ENCODE measurements at regions of chr22 and their contacts with region 1.

Region 1: GRCh38 chr22:35656284-35656752 is 8.1 kb downstream of the APOL6 start:
- DNase-seq: no peak
- ATAC-seq: no peak
- H3K4me3 ChIP-seq: no peak overlapping the region
- H3K27ac ChIP-seq: no peak overlapping the region
- H3K4me1 ChIP-seq: no peaks in the 10 kb centered on the region
- H3K27me3 ChIP-seq: no peaks in the 10 kb centered on the region
- CTCF ChIP-seq: no peak

Region 2: GRCh38 chr22:35697142-35697541 is 40.8 kb after region 1 on chr22:
- intact Hi-C with region 1: no loop called
- DNase-seq: no peak
- ATAC-seq: no peak
- H3K4me3 ChIP-seq: no peak overlapping the region
- H3K27ac ChIP-seq: no peak overlapping the region
- H3K4me1 ChIP-seq: no peaks in the 10 kb centered on the region
- H3K27me3 ChIP-seq: no peaks in the 10 kb centered on the region
- CTCF ChIP-seq: no peak

Region 3: DNA sequence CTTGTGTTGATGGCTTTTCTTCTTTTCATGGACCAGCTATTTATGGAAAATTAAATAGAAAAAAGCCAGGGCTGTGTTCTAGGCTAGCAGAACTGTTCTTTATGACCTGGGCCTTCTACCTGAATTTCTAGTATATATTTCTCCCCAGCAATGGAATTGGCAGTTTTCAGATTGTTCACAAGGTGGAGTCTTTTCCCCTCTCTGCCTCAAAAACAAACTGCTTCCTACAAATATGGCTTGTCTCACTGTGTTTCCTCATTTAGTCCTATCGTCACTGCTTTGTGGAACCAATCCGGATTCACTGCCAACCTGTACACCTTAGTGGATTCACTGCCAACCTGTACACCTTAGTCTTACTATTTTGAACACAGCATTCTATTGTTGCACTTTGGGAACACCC is 56.4 kb after region 1 on chr22:
- intact Hi-C with region 1: loop called in 1 of 3 experiments (anchors 10 kb)
- DNase-seq: no peak
- ATAC-seq: no peak
- H3K4me3 ChIP-seq: no peak overlapping the region
- H3K27ac ChIP-seq: no peak overlapping the region
- H3K4me1 ChIP-seq: no peaks in the 10 kb centered on the region
- H3K27me3 ChIP-seq: no peaks in the 10 kb centered on the region
- CTCF ChIP-seq: no peak

Region 4: DNA sequence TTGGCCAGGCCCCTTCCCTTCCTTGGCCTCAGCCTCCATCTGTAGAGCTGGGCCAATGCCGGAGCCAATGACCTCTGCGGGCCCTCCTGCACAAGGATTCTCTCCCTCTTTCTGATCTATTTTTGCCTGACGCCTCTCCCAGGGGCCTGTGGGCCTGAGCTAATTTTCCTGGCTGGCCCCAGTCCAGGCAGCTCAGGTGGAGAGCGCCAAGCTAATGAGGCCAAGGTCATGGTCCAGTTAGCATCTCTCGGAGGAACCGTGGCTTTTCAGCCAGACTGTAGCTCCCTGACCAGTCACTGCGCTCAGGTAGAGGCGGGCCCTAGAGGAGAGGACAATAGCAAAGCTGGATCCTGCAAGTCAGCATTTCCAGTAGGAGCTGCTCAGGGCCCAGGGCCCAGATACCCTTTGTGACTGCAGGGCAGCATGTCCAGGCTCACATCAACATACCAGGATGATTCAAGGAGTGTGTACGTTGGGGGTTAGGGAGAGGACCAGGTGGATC is 460.8 kb after region 1 on chr22:
- intact Hi-C with region 1: no loop called
- DNase-seq: peak in 1 of 6 donors; percentile 37
- ATAC-seq: peak in 1 of 4 donors; percentile 41
- H3K4me3 ChIP-seq: no peak overlapping the region
- H3K27ac ChIP-seq: no peak overlapping the region
- H3K4me1 ChIP-seq: no peaks in the 10 kb centered on the region
- H3K27me3 ChIP-seq: no peaks in the 10 kb centered on the region
- CTCF ChIP-seq: no peak

Measured in pancreas (tissue), 10 donors.